ENCODE measurements at regions of chrX and their contacts with region 1.

Region 1: DNA sequence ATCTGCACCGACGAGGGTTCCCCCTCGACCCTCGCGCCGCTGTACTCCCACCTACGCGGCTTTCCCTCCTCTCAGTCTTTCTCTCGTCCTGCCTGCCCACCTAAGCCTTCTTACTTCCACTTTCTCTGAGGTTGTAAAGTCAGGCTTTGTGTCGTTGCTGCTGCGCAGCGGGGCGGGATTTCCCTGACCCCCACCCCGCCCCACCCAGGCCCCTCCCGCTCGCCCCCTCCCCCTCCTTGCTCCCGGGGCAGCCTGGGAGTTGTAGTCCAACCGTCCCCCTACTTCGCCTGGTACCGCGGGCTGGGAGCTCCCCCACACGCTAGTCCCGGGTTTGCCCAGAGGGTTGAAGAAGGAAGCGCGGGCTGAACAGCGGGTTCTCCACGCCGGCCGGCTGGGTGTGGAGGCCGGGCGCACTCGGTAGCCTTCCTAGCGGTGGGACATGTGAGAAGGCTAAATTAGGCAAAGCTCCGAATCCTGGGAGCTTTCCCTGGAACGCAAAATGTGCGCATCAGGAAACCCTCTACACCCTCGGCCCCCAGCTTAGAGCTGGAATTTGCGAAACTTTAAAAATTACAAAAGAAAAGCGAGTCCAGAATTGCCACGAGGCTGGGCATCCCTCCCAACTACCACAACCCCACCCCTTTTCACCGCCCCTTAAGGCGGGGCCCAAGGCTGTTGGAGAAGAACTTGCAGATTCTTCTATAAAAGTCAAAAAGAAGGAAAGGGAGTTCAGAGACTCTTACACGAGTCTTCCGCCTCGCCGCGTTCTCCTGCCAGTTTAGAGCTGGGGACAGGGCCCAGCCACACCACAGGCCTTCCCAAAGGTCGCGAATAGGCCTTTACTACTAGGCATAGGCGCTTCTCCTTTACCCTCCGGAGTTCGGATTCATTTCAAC is at the start of gene ATP11C:
- DNase-seq: peak; percentile 72 to 82
- ATAC-seq: peak; percentile 87 to 89
- H3K4me3 ChIP-seq: peak within 1 kb of the TSS; percentile 77 to 90 (median 82)
- H3K27ac ChIP-seq: peak within 1 kb of the TSS; percentile 94 to 96 (median 94)
- H3K4me1 ChIP-seq: peaks cover 0 to 4% of the 10 kb centered on the region in 2 donors
- H3K27me3 ChIP-seq: no peaks in the 10 kb centered on the region
- CTCF ChIP-seq: no peak
- POLR2A ChIP-seq: peak; percentile 42 to 60
- total RNA-seq, gene ATP11C: 3.6 to 8.6 (median 7.0) TPM

Region 2: GRCh38 chrX:139831675-139832456 is 101.3 kb before region 1 on chrX:
- in situ Hi-C with region 1: no loop called
- intact Hi-C with region 1: loop called (anchors 10 kb)
- DNase-seq: peak in 1 of 2 donors; percentile 2
- ATAC-seq: no peak
- H3K4me3 ChIP-seq: no peak overlapping the region
- H3K27ac ChIP-seq: no peak overlapping the region
- H3K4me1 ChIP-seq: peaks cover 4 to 8% of the 10 kb centered on the region in 2 donors
- H3K27me3 ChIP-seq: no peaks in the 10 kb centered on the region
- CTCF ChIP-seq: no peak
- POLR2A ChIP-seq: no peak

Region 3: GRCh38 chrX:140040430-140040829 is 107.3 kb after region 1 on chrX:
- in situ Hi-C with region 1: no loop called
- intact Hi-C with region 1: no loop called
- DNase-seq: no peak
- ATAC-seq: no peak
- H3K4me3 ChIP-seq: no peak overlapping the region
- H3K27ac ChIP-seq: no peak overlapping the region
- H3K4me1 ChIP-seq: no peaks in the 10 kb centered on the region
- H3K27me3 ChIP-seq: no peaks in the 10 kb centered on the region
- CTCF ChIP-seq: no peak
- POLR2A ChIP-seq: no peak